ENCODE measurements at regions of chr12 and their contacts with region 1.

Region 1: GRCh38 chr12:96194971-96195844 is 1.0 kb downstream of the ELK3 start:
- DNase-seq: peak; percentile 83
- H3K4me3 ChIP-seq: peak overlapping the region; percentile 65 to 90 (median 68)
- H3K27ac ChIP-seq: peak overlapping the region; percentile 100
- H3K4me1 ChIP-seq: peaks cover 40% of the 10 kb centered on the region
- H3K27me3 ChIP-seq: no peaks in the 10 kb centered on the region
- CTCF ChIP-seq: no peak
- POLR2A ChIP-seq: peak; percentile 68

Region 2: GRCh38 chr12:96132819-96133218 is 62.4 kb before region 1 on chr12:
- CTCF ChIA-PET with region 1: interaction called, 4 read pairs
- POLR2A ChIA-PET with region 1: interaction called, 7 read pairs
- dilution Hi-C with region 1: no loop called
- intact Hi-C with region 1: loop called (anchors 1 kb)
- DNase-seq: peak; percentile 48
- H3K4me3 ChIP-seq: no peak overlapping the region
- H3K27ac ChIP-seq: no peak overlapping the region
- H3K4me1 ChIP-seq: peaks cover 29% of the 10 kb centered on the region
- H3K27me3 ChIP-seq: no peaks in the 10 kb centered on the region
- CTCF ChIP-seq: peak; percentile 15 to 42
- POLR2A ChIP-seq: no peak

Region 3: GRCh38 chr12:96164951-96165811 is 30.0 kb before region 1 on chr12:
- CTCF ChIA-PET with region 1: no interaction called
- POLR2A ChIA-PET with region 1: interaction called, 3 read pairs
- dilution Hi-C with region 1: no loop called
- intact Hi-C with region 1: loop called (anchors 1 kb)
- DNase-seq: peak; percentile 98
- H3K4me3 ChIP-seq: no peak overlapping the region
- H3K27ac ChIP-seq: peak overlapping the region; percentile 81
- H3K4me1 ChIP-seq: peaks cover 45% of the 10 kb centered on the region
- H3K27me3 ChIP-seq: no peaks in the 10 kb centered on the region
- CTCF ChIP-seq: no peak
- POLR2A ChIP-seq: peak; percentile 50

Region 4: GRCh38 chr12:96208801-96209549 is 13.8 kb after region 1 on chr12:
- CTCF ChIA-PET with region 1: interaction called, 10 read pairs
- POLR2A ChIA-PET with region 1: interaction called, 4 read pairs
- dilution Hi-C with region 1: no loop called
- intact Hi-C with region 1: loop called (anchors 1 kb)
- DNase-seq: peak; percentile 91
- H3K4me3 ChIP-seq: no peak overlapping the region
- H3K27ac ChIP-seq: peak overlapping the region; percentile 82
- H3K4me1 ChIP-seq: peaks cover 100% of the 10 kb centered on the region
- H3K27me3 ChIP-seq: no peaks in the 10 kb centered on the region
- CTCF ChIP-seq: peak in 1 of 2 donors; percentile 18
- POLR2A ChIP-seq: no peak

Region 5: GRCh38 chr12:96237465-96238077 is 42.4 kb after region 1 on chr12:
- CTCF ChIA-PET with region 1: no interaction called
- POLR2A ChIA-PET with region 1: no interaction called
- dilution Hi-C with region 1: no loop called
- intact Hi-C with region 1: no loop called
- DNase-seq: peak; percentile 96
- H3K4me3 ChIP-seq: no peak overlapping the region
- H3K27ac ChIP-seq: peak overlapping the region; percentile 86
- H3K4me1 ChIP-seq: peaks cover 94% of the 10 kb centered on the region
- H3K27me3 ChIP-seq: no peaks in the 10 kb centered on the region
- CTCF ChIP-seq: no peak
- POLR2A ChIP-seq: no peak

Measured in endothelial cell of umbilical vein (primary cell).